ENCODE measurements at regions of chr10 and their contacts with region 1.

Region 1: GRCh38 chr10:72331601-72332422 is 22.9 kb downstream of the DNAJB12 start:
- DNase-seq: peak; percentile 98
- H3K4me3 Mint-ChIP-seq: peak overlapping the region; percentile 76
- H3K27ac Mint-ChIP-seq: peak overlapping the region; percentile 100
- H3K4me1 Mint-ChIP-seq: peaks cover 87% of the 10 kb centered on the region
- H3K27me3 Mint-ChIP-seq: peaks cover 2% of the 10 kb centered on the region

Region 2: GRCh38 chr10:72048450-72049124 is 283.2 kb before region 1 on chr10:
- CTCF ChIA-PET with region 1: interaction called, 83 read pairs
- intact Hi-C with region 1: no loop called
- DNase-seq: peak; percentile 98
- H3K4me3 Mint-ChIP-seq: no peak overlapping the region
- H3K27ac Mint-ChIP-seq: no peak overlapping the region
- H3K4me1 Mint-ChIP-seq: peaks cover 3% of the 10 kb centered on the region
- H3K27me3 Mint-ChIP-seq: no peaks in the 10 kb centered on the region

Region 3: GRCh38 chr10:72133517-72133916 is 198.3 kb before region 1 on chr10:
- CTCF ChIA-PET with region 1: interaction called, 53 read pairs
- intact Hi-C with region 1: loop called (anchors 1 kb)
- DNase-seq: no peak
- H3K4me3 Mint-ChIP-seq: no peak overlapping the region
- H3K27ac Mint-ChIP-seq: no peak overlapping the region
- H3K4me1 Mint-ChIP-seq: peaks cover 39% of the 10 kb centered on the region
- H3K27me3 Mint-ChIP-seq: no peaks in the 10 kb centered on the region

Region 4: DNA sequence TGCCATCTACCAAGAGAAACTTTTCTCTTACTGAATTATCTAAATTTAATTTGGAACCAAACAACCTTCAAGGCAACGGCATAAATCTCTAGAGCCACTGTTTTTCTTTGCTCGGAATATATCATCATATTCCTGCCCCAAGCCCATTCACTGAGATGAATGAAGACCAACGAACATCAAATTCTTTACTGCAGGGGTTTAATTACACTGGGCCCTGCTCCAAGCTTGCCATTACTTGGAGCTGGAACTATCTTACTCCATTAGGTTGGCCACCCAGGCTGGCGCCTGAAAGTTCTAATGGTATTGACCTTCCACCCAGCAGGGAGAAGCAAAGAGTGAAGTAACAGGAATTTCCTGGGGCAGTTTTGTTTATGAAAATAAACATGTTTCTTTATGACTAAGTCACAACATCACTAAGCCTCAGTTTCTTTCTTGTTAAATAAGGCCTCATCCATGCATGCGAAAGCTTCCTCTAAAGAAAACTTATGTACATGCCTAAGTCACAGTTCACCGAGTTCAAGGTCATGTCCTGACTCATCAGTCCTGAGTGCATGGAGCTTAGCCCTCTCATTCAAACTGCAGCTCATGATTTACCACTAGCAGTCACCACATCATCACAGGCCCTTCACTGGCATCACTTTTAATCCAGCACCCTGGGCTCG is 158.0 kb before region 1 on chr10:
- CTCF ChIA-PET with region 1: no interaction called
- intact Hi-C with region 1: no loop called
- DNase-seq: peak; percentile 14
- H3K4me3 Mint-ChIP-seq: no peak overlapping the region
- H3K27ac Mint-ChIP-seq: no peak overlapping the region
- H3K4me1 Mint-ChIP-seq: peaks cover 21% of the 10 kb centered on the region
- H3K27me3 Mint-ChIP-seq: no peaks in the 10 kb centered on the region

Region 5: GRCh38 chr10:72248468-72249151 is 83.2 kb before region 1 on chr10:
- CTCF ChIA-PET with region 1: interaction called, 9 read pairs
- intact Hi-C with region 1: loop called (anchors 1 kb)
- DNase-seq: peak; percentile 87
- H3K4me3 Mint-ChIP-seq: peak overlapping the region; percentile 75
- H3K27ac Mint-ChIP-seq: peak overlapping the region; percentile 92
- H3K4me1 Mint-ChIP-seq: peaks cover 78% of the 10 kb centered on the region
- H3K27me3 Mint-ChIP-seq: no peaks in the 10 kb centered on the region

Region 6: GRCh38 chr10:72292223-72292691 is 39.6 kb before region 1 on chr10:
- CTCF ChIA-PET with region 1: interaction called, 37 read pairs
- intact Hi-C with region 1: loop called (anchors 1 kb)
- DNase-seq: peak; percentile 90
- H3K4me3 Mint-ChIP-seq: peak overlapping the region; percentile 43
- H3K27ac Mint-ChIP-seq: peak overlapping the region; percentile 100
- H3K4me1 Mint-ChIP-seq: peaks cover 59% of the 10 kb centered on the region
- H3K27me3 Mint-ChIP-seq: no peaks in the 10 kb centered on the region

Region 7: GRCh38 chr10:72319416-72320254 is 12.2 kb before region 1 on chr10:
- CTCF ChIA-PET with region 1: interaction called, 9 read pairs
- intact Hi-C with region 1: loop called (anchors 1 kb)
- DNase-seq: peak; percentile 94
- H3K4me3 Mint-ChIP-seq: peak overlapping the region; percentile 86
- H3K27ac Mint-ChIP-seq: peak overlapping the region; percentile 99
- H3K4me1 Mint-ChIP-seq: peaks cover 79% of the 10 kb centered on the region
- H3K27me3 Mint-ChIP-seq: no peaks in the 10 kb centered on the region

Region 8: GRCh38 chr10:72386916-72387586 is 55.2 kb after region 1 on chr10:
- CTCF ChIA-PET with region 1: no interaction called
- intact Hi-C with region 1: no loop called
- DNase-seq: no peak
- H3K4me3 Mint-ChIP-seq: no peak overlapping the region
- H3K27ac Mint-ChIP-seq: no peak overlapping the region
- H3K4me1 Mint-ChIP-seq: no peaks in the 10 kb centered on the region
- H3K27me3 Mint-ChIP-seq: no peaks in the 10 kb centered on the region

Region 9: DNA sequence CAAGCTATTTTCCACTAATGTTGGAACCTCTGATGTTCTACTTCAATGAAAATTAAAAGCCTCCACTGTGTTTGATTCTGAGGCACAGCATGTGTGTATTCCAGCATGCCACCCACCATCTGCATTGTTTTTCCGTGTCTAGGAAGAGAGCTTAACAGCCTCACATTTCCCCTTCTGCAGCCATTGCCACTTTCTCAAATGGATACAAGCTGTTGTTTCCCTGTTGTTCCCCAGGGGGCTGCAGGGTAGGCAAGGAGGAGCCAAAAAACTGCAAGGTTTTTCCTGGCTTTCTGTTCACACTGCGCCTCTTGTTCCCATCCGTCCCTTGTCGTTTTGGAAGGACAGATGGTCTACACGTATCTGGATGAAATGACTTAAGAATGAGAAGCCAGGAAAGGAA is 95.2 kb after region 1 on chr10:
- CTCF ChIA-PET with region 1: no interaction called
- intact Hi-C with region 1: no loop called
- DNase-seq: no peak
- H3K4me3 Mint-ChIP-seq: no peak overlapping the region
- H3K27ac Mint-ChIP-seq: no peak overlapping the region
- H3K4me1 Mint-ChIP-seq: no peaks in the 10 kb centered on the region
- H3K27me3 Mint-ChIP-seq: no peaks in the 10 kb centered on the region